B cell (primary cell): ENCODE measurements at regions of chr10 and their contacts with region 1.

Region 1: GRCh38 chr10:75019370-75019769 is 92.1 kb upstream of the SAMD8 start:
- DNase-seq: peak; percentile 55
- ATAC-seq: no peak
- H3K4me3 ChIP-seq: no peak overlapping the region
- H3K4me3 Mint-ChIP-seq: no peak overlapping the region
- H3K27ac ChIP-seq: no peak overlapping the region
- H3K27ac Mint-ChIP-seq: no peak overlapping the region
- H3K4me1 ChIP-seq: peaks cover 7 to 8% of the 10 kb centered on the region in 2 donors
- H3K4me1 Mint-ChIP-seq: peaks cover 22% of the 10 kb centered on the region
- H3K27me3 ChIP-seq: no peaks in the 10 kb centered on the region
- H3K27me3 Mint-ChIP-seq: no peaks in the 10 kb centered on the region
- CTCF ChIP-seq: peak; percentile 53

Region 2: GRCh38 chr10:74244097-74244685 is 775.2 kb before region 1 on chr10:
- CTCF ChIA-PET with region 1: interaction called, 11 read pairs
- POLR2A ChIA-PET with region 1: no interaction called
- intact Hi-C with region 1: no loop called
- DNase-seq: peak; percentile 51
- ATAC-seq: no peak
- H3K4me3 ChIP-seq: no peak overlapping the region
- H3K4me3 Mint-ChIP-seq: no peak overlapping the region
- H3K27ac ChIP-seq: no peak overlapping the region
- H3K27ac Mint-ChIP-seq: no peak overlapping the region
- H3K4me1 ChIP-seq: no peaks in the 10 kb centered on the region
- H3K4me1 Mint-ChIP-seq: peaks cover 4% of the 10 kb centered on the region
- H3K27me3 ChIP-seq: no peaks in the 10 kb centered on the region
- H3K27me3 Mint-ChIP-seq: no peaks in the 10 kb centered on the region
- CTCF ChIP-seq: peak; percentile 78

Region 3: GRCh38 chr10:74419958-74420375 is 599.4 kb before region 1 on chr10:
- CTCF ChIA-PET with region 1: interaction called, 28 read pairs
- POLR2A ChIA-PET with region 1: no interaction called
- intact Hi-C with region 1: loop called (anchors 5 kb)
- DNase-seq: peak; percentile 42
- ATAC-seq: peak; percentile 49
- H3K4me3 ChIP-seq: no peak overlapping the region
- H3K4me3 Mint-ChIP-seq: no peak overlapping the region
- H3K27ac ChIP-seq: no peak overlapping the region
- H3K27ac Mint-ChIP-seq: no peak overlapping the region
- H3K4me1 ChIP-seq: peaks cover 7 to 16% of the 10 kb centered on the region in 2 donors
- H3K4me1 Mint-ChIP-seq: peaks cover 21% of the 10 kb centered on the region
- H3K27me3 ChIP-seq: no peaks in the 10 kb centered on the region
- H3K27me3 Mint-ChIP-seq: no peaks in the 10 kb centered on the region
- CTCF ChIP-seq: peak; percentile 68

Region 4: GRCh38 chr10:74750848-74751274 is 268.5 kb before region 1 on chr10:
- CTCF ChIA-PET with region 1: interaction called, 23 read pairs
- POLR2A ChIA-PET with region 1: no interaction called
- intact Hi-C with region 1: no loop called
- DNase-seq: peak; percentile 28
- ATAC-seq: peak; percentile 41
- H3K4me3 ChIP-seq: no peak overlapping the region
- H3K4me3 Mint-ChIP-seq: no peak overlapping the region
- H3K27ac ChIP-seq: no peak overlapping the region
- H3K27ac Mint-ChIP-seq: no peak overlapping the region
- H3K4me1 ChIP-seq: peaks cover 0 to 7% of the 10 kb centered on the region in 2 donors
- H3K4me1 Mint-ChIP-seq: peaks cover 7% of the 10 kb centered on the region
- H3K27me3 ChIP-seq: no peaks in the 10 kb centered on the region
- H3K27me3 Mint-ChIP-seq: no peaks in the 10 kb centered on the region
- CTCF ChIP-seq: no peak

Region 5: DNA sequence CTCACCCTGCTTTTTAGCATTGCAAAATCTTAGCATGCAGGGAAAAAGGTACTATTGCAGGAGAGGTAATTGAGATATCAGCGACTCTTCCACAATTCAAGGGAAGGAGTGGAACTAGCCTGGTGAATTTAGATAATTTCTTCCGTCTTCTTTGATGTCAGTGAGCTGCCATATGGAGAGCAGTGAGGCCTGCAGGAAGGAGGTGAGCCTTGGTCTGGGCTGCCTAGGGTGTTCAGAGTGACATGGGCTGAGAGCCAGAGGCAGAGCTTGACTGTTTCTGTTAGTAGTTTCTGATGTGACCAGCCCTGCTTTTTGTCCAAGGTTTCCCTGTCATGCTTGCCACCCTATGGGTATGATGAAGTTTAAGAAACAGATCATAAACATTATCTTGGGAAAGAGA is 164.3 kb before region 1 on chr10:
- CTCF ChIA-PET with region 1: interaction called, 3 read pairs
- POLR2A ChIA-PET with region 1: no interaction called
- intact Hi-C with region 1: loop called (anchors 10 kb)
- DNase-seq: peak; percentile 38
- ATAC-seq: peak; percentile 16
- H3K4me3 ChIP-seq: peak overlapping the region in 1 of 5 experiments; percentile 21
- H3K4me3 Mint-ChIP-seq: peak overlapping the region; percentile 68
- H3K27ac ChIP-seq: peak overlapping the region; percentile 72 to 88
- H3K27ac Mint-ChIP-seq: peak overlapping the region; percentile 82
- H3K4me1 ChIP-seq: peaks cover 28 to 31% of the 10 kb centered on the region in 2 donors
- H3K4me1 Mint-ChIP-seq: peaks cover 45% of the 10 kb centered on the region
- H3K27me3 ChIP-seq: no peaks in the 10 kb centered on the region
- H3K27me3 Mint-ChIP-seq: no peaks in the 10 kb centered on the region
- CTCF ChIP-seq: no peak

Region 6: DNA sequence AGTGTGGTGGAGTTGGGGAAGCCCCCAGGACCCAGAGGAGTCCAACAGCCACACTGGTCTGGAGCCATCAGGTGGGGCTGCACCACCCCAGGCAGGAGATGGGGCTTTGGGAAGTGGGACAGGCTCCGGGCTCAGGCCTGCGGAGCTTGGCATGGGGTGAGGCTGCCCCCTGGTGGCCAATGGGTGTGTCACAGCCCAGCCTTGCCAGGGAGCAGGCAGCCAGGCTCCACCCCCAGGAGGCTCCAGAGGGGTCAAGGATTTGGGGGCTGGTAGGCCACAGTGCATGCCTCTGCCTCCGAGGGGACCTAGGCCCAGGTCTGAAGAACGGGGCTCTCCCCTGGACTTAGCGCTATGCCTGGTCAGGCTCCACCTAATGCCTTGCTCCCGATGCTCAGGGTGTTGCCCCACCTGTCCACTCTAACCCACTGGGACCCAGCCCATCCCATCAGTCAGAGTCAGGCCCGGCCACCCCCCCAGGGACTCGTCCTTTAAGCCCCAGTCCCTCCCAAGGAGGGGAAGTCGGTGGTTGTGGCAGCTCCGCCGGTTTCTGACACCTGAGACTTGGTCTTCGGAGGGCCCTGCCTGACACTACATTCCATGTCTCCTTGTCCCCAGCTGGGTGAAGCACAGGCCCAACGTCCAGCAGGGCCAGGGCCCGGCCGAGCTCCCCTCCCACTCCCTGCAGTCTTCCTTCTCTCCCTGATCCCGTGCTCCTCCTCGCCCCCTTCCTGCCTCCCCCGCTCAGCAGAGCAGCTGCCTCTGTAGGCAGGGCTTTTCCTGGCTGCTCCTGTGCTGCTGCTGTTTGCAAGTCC is 80.8 kb after region 1 on chr10:
- CTCF ChIA-PET with region 1: interaction called, 10 read pairs
- POLR2A ChIA-PET with region 1: no interaction called
- intact Hi-C with region 1: no loop called
- DNase-seq: peak; percentile 83
- ATAC-seq: peak; percentile 98
- H3K4me3 ChIP-seq: no peak overlapping the region
- H3K4me3 Mint-ChIP-seq: no peak overlapping the region
- H3K27ac ChIP-seq: no peak overlapping the region
- H3K27ac Mint-ChIP-seq: no peak overlapping the region
- H3K4me1 ChIP-seq: peaks cover 0 to 7% of the 10 kb centered on the region in 2 donors
- H3K4me1 Mint-ChIP-seq: no peaks in the 10 kb centered on the region
- H3K27me3 ChIP-seq: no peaks in the 10 kb centered on the region
- H3K27me3 Mint-ChIP-seq: no peaks in the 10 kb centered on the region
- CTCF ChIP-seq: peak; percentile 100

Region 7: DNA sequence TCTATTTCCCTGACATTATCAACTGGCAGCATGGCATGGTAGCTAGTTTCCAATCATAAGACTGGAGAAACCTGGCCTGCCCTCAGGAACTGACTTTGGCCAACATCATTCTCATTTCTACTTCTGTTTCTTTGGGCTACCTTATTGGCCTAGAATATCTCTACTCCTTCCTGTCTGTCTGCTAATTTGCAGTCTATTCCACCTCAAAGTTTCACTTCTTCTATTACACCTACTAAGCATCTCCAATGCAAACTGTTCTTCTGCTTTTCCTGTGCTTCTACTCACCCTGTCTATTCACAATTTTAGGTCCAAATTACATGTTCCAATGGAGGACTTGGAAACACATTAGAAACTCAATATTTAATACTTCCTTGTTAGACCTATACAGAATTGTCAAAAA is 316.6 kb after region 1 on chr10:
- CTCF ChIA-PET with region 1: no interaction called
- POLR2A ChIA-PET with region 1: no interaction called
- intact Hi-C with region 1: no loop called
- DNase-seq: peak; percentile 50
- ATAC-seq: peak; percentile 45
- H3K4me3 ChIP-seq: no peak overlapping the region
- H3K4me3 Mint-ChIP-seq: peak overlapping the region; percentile 5
- H3K27ac ChIP-seq: peak overlapping the region in 1 of 2 donors; percentile 26
- H3K27ac Mint-ChIP-seq: peak overlapping the region; percentile 51
- H3K4me1 ChIP-seq: peaks cover 7 to 10% of the 10 kb centered on the region in 2 donors
- H3K4me1 Mint-ChIP-seq: peaks cover 12% of the 10 kb centered on the region
- H3K27me3 ChIP-seq: peaks cover 0 to 7% (median 3%) of the 10 kb centered on the region in 4 experiments
- H3K27me3 Mint-ChIP-seq: peaks cover 8% of the 10 kb centered on the region
- CTCF ChIP-seq: no peak